ENCODE measurements at regions of chr13 and their contacts with region 1.

Region 1: DNA sequence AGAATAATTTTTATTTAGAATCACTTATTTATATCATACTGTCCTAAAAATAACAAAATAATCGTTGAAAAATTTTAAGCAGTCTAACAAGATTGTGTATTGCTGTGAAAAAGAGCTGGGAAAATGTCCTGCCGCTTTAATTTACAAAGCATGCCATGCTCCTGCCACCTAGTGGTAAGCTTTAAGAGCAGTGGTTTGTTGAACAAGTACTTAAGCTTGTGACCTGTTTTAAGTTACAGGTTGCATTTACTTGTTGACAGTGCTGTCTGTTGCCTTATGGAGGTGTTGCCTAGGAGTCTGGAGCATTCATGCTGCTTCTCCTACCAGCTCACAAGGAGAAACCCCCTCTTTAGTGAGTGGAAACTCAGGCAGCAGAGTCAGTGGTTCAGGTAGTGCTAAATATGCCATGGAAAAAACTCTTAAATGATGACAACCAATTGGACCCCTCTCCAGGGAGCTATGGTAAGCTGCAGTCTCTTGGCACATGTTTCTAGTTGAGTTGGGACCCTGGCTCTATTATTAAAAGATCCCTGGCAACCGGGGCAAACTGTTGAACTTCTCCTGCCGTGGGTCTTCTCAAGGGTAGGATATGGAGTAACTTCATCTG is 68.4 kb downstream of the SPATA13 start:
- DNase-seq: peak; percentile 49
- H3K4me3 Mint-ChIP-seq: no peak overlapping the region
- H3K27ac Mint-ChIP-seq: no peak overlapping the region
- H3K4me1 Mint-ChIP-seq: peaks cover 39% of the 10 kb centered on the region
- H3K27me3 Mint-ChIP-seq: no peaks in the 10 kb centered on the region

Region 2: GRCh38 chr13:24020375-24020830 is 208.6 kb before region 1 on chr13:
- CTCF ChIA-PET with region 1: interaction called, 25 read pairs
- POLR2A ChIA-PET with region 1: no interaction called
- DNase-seq: peak; percentile 51
- H3K4me3 Mint-ChIP-seq: no peak overlapping the region
- H3K27ac Mint-ChIP-seq: no peak overlapping the region
- H3K4me1 Mint-ChIP-seq: peaks cover 6% of the 10 kb centered on the region
- H3K27me3 Mint-ChIP-seq: no peaks in the 10 kb centered on the region

Region 3: DNA sequence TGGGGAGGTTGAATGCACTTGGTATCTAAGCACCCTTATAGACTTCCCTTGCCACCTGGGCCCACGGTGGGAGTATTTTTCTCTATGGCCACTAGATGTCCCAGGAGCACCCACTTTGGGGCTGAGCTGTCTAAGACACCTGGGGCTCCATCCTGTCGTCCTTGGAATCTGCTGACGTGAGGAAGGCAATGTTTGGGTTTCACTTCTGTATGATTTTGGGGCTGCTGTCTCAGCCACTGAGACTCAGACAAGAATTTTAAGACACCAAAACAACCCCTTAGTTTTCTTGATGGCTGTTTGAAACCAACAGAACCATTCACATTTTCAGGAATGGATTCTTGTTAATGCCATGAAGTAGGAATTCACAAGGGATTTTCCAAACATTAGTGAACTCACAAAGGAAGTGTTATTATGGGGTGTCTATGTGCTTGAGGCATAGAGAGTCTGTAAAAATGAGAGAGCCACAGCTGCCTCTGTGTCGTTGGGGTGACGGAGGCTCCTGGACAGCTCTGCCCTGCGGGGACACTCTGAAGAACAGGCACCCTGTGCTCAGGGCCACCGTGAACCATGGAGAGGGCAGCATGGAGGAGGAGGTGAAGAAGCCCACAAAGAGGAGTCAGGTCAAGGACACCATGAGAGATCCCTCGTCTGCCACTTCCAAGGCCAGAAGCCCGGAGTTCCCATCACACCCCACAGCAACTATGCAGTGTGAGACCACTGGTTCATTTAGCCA is 175.3 kb before region 1 on chr13:
- CTCF ChIA-PET with region 1: interaction called, 17 read pairs
- POLR2A ChIA-PET with region 1: interaction called, 4 read pairs
- DNase-seq: peak; percentile 73
- H3K4me3 Mint-ChIP-seq: no peak overlapping the region
- H3K27ac Mint-ChIP-seq: no peak overlapping the region
- H3K4me1 Mint-ChIP-seq: peaks cover 14% of the 10 kb centered on the region
- H3K27me3 Mint-ChIP-seq: peaks cover 10% of the 10 kb centered on the region

Region 4: DNA sequence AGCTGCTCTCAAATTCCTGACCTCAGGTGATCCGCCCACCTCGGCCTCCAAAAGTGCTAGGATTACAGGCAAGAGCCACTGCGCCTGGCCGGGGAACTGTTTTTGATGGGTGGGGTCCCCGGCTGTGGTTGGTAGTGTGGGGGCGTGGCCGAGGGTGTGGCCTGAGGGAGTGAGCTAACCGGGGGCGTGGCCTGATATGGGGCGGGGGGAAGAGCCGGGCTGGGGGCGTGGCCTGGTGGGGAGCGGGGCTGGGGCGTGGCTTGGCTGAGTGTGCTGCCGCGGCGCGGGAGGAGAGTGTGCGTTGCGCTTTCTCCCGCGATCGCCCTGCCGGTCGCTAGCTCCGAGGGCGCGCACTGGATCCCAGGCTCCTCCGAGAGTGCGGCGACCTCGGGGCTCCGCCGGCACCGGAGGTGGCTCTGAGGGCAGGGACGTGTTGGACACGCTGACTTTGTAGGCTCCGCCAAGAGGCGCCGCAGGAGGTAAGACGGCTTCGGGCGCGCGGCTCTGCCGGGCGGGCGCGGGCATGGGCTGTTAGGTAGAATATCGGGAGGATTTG is 68.4 kb before region 1 on chr13 and contains the start of gene SPATA13:
- CTCF ChIA-PET with region 1: interaction called, 11 read pairs
- POLR2A ChIA-PET with region 1: no interaction called
- DNase-seq: peak; percentile 94
- H3K4me3 Mint-ChIP-seq: peak within 1 kb of the TSS; percentile 84
- H3K27ac Mint-ChIP-seq: peak within 1 kb of the TSS; percentile 18
- H3K4me1 Mint-ChIP-seq: peaks cover 25% of the 10 kb centered on the region
- H3K27me3 Mint-ChIP-seq: peaks cover 10% of the 10 kb centered on the region
- total RNA-seq, gene SPATA13: 55.4 to 59.2 TPM

Measured in activated CD4-positive, alpha-beta memory T cell treated with anti-CD3 and anti-CD28 coated beads, Interleukin-2, amount 10 ng/mL, durations not matched to agents 7 days and 5 days (primary cell).